Activated CD4-positive, alpha-beta memory T cell treated with anti-CD3 and anti-CD28 coated beads for 36 hours (primary cell): ENCODE measurements at regions of chr6 and their contacts with region 1.

Region 1: DNA sequence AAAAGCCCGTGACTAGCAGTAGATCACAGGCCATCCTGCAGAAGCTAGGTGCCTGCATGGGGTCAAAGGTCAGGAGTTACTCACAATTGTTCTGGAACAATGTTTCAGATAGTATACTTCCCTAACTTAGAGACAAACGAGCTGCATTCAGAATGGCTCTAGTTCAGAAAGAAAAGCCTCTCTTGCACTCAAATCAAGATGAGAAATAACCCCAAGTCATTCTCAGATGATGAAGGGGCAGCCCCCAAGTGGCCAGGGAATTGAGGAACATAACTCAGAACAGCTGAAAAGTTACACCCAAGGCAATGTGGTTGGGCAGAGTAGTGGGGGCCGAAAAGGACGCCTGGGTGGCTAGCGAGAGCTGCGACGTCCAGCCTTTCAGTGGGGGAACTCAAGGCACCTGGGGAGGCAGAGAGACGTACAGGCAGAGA is 27.8 kb downstream of the FYN start:
- DNase-seq: peak; percentile 56
- H3K4me3 Mint-ChIP-seq: peak overlapping the region; percentile 14
- H3K27ac Mint-ChIP-seq: peak overlapping the region; percentile 86
- H3K4me1 Mint-ChIP-seq: peaks cover 62% of the 10 kb centered on the region
- H3K27me3 Mint-ChIP-seq: no peaks in the 10 kb centered on the region

Region 2: GRCh38 chr6:111591104-111591900 is 254.2 kb before region 1 on chr6:
- CTCF ChIA-PET with region 1: no interaction called
- POLR2A ChIA-PET with region 1: no interaction called
- intact Hi-C with region 1: no loop called
- DNase-seq: no peak
- H3K4me3 Mint-ChIP-seq: no peak overlapping the region
- H3K27ac Mint-ChIP-seq: no peak overlapping the region
- H3K4me1 Mint-ChIP-seq: peaks cover 26% of the 10 kb centered on the region
- H3K27me3 Mint-ChIP-seq: no peaks in the 10 kb centered on the region

Region 3: GRCh38 chr6:111683749-111684267 is 161.6 kb before region 1 on chr6:
- CTCF ChIA-PET with region 1: no interaction called
- POLR2A ChIA-PET with region 1: no interaction called
- intact Hi-C with region 1: no loop called
- DNase-seq: no peak
- H3K4me3 Mint-ChIP-seq: no peak overlapping the region
- H3K27ac Mint-ChIP-seq: peak overlapping the region; percentile 72
- H3K4me1 Mint-ChIP-seq: peaks cover 80% of the 10 kb centered on the region
- H3K27me3 Mint-ChIP-seq: no peaks in the 10 kb centered on the region

Region 4: DNA sequence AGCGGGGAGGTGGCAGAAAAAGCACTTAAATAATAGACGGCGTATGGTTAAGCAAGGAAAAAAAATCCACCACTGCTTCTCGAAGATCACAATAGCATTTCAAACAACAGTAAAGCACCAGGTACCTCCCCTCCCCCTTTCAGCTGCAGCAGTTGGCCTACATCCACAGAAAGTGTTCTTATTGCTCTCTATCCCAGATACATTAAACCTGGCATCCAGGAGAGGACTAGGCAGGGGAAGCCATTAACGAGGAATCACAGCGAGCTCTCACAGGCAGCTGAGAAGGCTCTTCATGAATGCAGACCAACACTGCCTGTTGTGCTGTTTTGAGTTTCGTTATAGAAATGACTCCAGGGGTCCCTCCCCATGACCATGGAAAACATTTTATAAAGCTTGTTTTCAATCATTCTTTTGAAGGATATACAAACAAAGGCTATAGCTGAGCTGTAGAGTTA is 16.0 kb after region 1 on chr6:
- CTCF ChIA-PET with region 1: interaction called, 7 read pairs
- POLR2A ChIA-PET with region 1: interaction called, 26 read pairs
- intact Hi-C with region 1: loop called (anchors 1 kb)
- DNase-seq: peak; percentile 48
- H3K4me3 Mint-ChIP-seq: peak overlapping the region; percentile 2
- H3K27ac Mint-ChIP-seq: peak overlapping the region; percentile 52
- H3K4me1 Mint-ChIP-seq: peaks cover 100% of the 10 kb centered on the region
- H3K27me3 Mint-ChIP-seq: no peaks in the 10 kb centered on the region

Region 5: DNA sequence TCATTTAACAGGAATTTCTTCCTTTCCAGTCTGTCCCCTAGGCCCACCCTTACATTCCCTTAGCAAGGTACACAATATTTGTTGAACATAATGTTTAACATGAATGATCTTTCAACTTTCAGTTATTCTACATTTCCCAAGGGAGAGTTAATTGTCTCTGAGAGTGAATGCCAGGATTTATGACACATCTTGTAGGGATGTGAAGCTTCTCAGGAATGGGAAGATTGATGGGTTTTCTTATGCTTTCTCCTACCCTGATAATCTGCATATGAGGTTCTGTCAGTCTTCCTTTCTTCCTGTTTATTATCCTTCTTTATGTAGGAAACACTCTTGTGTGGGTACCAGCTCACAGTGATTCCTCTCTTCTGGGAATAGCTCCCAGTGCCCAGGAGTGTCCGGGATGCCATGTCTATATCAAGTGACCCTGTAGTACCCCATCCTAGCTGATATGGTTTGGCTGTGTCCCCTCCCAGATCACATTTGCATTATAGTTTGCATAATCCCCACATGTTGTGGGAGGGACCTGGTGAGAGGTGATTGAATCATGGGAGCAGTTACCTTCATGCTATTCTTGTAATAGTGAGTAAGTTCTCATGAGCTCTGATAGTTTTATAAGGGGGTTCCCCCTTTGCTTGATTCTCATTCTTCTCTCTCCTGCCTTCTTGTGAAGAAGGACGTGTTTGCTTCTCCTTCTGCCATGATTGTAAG is 34.9 kb after region 1 on chr6:
- CTCF ChIA-PET with region 1: no interaction called
- POLR2A ChIA-PET with region 1: no interaction called
- intact Hi-C with region 1: no loop called
- DNase-seq: no peak
- H3K4me3 Mint-ChIP-seq: no peak overlapping the region
- H3K27ac Mint-ChIP-seq: no peak overlapping the region
- H3K4me1 Mint-ChIP-seq: no peaks in the 10 kb centered on the region
- H3K27me3 Mint-ChIP-seq: no peaks in the 10 kb centered on the region

Region 6: DNA sequence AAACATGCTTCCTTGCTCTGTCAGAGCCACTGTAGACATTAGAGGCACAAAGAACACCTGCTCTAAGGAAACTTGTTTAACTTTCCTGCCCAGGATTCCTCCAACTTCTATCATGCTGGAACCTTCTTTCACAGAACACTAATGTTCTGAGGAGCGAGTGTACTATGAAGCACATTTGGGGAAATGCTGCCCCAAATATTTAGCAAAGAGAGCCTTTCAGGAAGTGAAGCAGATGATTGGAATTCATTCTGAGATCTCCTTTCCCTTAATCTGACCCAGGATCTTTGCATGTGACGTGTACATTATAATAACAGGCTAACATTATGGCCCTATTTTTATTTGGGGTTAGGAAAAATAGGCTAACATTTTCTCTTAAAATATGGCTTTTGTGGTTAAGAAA is 48.8 kb after region 1 on chr6:
- CTCF ChIA-PET with region 1: no interaction called
- POLR2A ChIA-PET with region 1: no interaction called
- intact Hi-C with region 1: no loop called
- DNase-seq: no peak
- H3K4me3 Mint-ChIP-seq: no peak overlapping the region
- H3K27ac Mint-ChIP-seq: no peak overlapping the region
- H3K4me1 Mint-ChIP-seq: no peaks in the 10 kb centered on the region
- H3K27me3 Mint-ChIP-seq: no peaks in the 10 kb centered on the region